AG04450 (cell line): ENCODE measurements at regions of chr20 and their contacts with region 1.

Region 1: DNA sequence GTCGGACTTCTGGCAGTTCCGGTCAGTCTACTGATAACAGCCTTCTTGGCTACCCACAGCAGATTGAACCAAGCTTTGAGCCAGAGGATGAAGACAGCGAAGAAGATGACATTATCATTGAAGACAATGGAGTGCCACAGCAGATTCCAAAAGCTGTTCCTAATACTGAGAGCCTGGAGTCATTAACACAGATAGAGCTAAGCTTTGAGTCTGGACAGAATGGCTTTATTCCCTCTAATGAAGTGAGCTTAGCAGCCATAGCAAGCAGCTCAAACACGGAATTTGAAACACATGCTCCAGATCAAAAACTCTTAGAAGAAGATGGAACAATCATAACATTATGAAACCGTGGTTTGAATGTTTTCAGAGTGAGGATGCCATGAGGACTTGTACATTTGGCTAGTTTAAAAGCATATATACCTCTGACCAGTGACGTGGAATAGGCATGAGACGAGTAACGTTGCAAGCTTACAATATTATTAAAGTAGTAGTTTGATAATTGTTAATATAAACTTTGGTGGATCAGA is 18.8 kb downstream of the PARD6B start:
- DNase-seq: no peak
- H3K4me3 ChIP-seq: no peak overlapping the region
- H3K27ac ChIP-seq: no peak overlapping the region
- H3K27me3 ChIP-seq: no peaks in the 10 kb centered on the region
- CTCF ChIP-seq: no peak

Region 2: GRCh38 chr20:50379049-50379990 is 370.9 kb before region 1 on chr20:
- CTCF ChIA-PET with region 1: no interaction called
- POLR2A ChIA-PET with region 1: no interaction called
- DNase-seq: peak; percentile 46
- H3K4me3 ChIP-seq: peak overlapping the region; percentile 27
- H3K27ac ChIP-seq: peak overlapping the region; percentile 57
- H3K27me3 ChIP-seq: no peaks in the 10 kb centered on the region
- CTCF ChIP-seq: no peak

Region 3: GRCh38 chr20:50588034-50588611 is 162.1 kb before region 1 on chr20:
- CTCF ChIA-PET with region 1: interaction called, 11 read pairs
- POLR2A ChIA-PET with region 1: no interaction called
- DNase-seq: no peak
- H3K4me3 ChIP-seq: no peak overlapping the region
- H3K27ac ChIP-seq: no peak overlapping the region
- H3K27me3 ChIP-seq: no peaks in the 10 kb centered on the region
- CTCF ChIP-seq: peak; percentile 97

Region 4: DNA sequence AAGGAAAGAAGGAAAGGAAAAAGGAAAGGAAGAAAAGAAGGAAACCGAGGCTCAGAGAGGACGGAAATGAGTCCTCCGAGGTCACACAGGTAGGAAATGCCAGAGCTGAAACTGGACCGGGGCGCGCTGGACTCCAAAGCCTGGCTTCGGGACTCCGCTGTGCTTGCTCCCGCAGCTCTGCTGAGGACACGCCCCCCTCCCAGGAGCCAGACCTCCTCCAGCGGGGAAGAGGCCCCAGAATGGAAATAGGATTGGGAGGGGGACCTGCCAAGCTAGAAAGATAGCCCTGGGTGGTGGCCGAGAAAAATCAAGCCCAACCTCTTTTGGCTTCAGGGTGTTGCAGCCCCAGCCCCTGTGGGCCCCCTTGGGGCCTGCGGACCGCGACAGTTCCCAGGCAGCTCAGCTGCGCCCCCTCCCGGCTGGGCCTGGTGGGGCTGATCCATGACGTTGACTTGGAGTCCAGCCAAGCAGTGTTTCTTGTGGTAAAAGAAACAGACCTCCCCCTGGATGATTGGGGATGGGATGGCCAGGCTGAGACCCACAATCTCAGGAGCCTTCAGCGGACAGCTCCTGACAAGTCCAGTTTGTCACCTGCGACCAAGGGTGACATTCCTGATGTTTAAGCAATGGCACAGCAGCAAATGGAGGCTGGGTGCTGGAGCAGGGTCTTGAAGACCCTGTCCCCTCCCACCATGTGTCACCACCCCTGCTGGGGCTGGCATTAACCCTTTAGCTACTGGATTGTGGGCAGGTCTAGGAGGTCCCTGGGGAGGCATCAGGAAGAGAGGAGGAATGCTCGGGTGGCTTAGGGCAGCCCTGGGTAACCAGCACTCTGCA is 114.3 kb before region 1 on chr20:
- CTCF ChIA-PET with region 1: interaction called, 10 read pairs
- POLR2A ChIA-PET with region 1: no interaction called
- DNase-seq: no peak
- H3K4me3 ChIP-seq: peak overlapping the region; percentile 31; the same call in 1 of the 2 replicates
- H3K27ac ChIP-seq: peak overlapping the region; percentile 89
- H3K27me3 ChIP-seq: no peaks in the 10 kb centered on the region
- CTCF ChIP-seq: peak; percentile 94

Region 5: GRCh38 chr20:50724851-50725721 is 25.1 kb before region 1 on chr20:
- CTCF ChIA-PET with region 1: interaction called, 14 read pairs
- POLR2A ChIA-PET with region 1: no interaction called
- DNase-seq: peak; percentile 90
- H3K4me3 ChIP-seq: no peak overlapping the region; the same call in 1 of the 2 replicates
- H3K27ac ChIP-seq: peak overlapping the region; percentile 82
- H3K27me3 ChIP-seq: no peaks in the 10 kb centered on the region
- CTCF ChIP-seq: no peak

Region 6: DNA sequence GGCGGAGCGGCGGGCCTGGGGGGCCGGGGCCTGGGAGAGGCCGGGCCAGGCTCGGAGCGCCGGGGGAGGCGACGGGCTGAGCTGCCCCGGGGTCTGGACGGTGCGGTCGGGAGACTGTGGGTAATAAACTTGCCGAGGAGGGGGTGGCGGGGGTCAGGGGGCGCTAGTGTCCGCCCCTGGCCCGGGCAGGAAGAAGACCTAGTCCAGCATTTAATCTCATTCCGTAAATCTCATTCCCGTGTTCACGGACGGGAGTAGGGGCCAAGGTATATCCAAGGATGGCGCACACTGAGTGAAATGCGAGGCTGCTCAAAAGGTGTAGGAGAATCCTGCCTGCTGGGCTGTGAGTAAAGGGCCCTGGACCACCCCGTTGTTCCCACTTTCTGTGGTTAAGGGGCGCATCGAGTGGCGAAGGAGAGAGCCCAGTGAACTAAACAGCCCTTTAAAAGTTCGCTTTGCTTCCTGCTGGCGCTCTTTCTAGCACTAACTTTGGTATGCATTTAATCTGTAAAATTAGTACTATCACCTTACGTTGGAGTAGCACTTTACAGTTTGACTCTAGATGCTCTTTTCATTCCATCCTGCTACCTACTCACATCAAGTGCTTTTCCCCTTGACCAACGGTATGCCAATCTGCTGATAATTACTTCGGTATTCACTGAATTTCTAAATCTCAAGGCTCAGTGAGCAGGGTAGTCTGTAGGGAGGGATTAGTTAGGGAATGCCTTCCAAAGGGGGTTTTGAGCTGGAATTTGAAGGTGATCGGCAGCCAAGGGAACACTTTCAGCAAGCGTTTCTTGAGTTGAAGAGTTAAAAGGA is 18.1 kb before region 1 on chr20:
- CTCF ChIA-PET with region 1: interaction called, 20 read pairs
- POLR2A ChIA-PET with region 1: no interaction called
- DNase-seq: no peak
- H3K4me3 ChIP-seq: peak overlapping the region; percentile 74
- H3K27ac ChIP-seq: no peak overlapping the region
- H3K27me3 ChIP-seq: peaks cover 2% of the 10 kb centered on the region
- CTCF ChIP-seq: no peak

Region 7: DNA sequence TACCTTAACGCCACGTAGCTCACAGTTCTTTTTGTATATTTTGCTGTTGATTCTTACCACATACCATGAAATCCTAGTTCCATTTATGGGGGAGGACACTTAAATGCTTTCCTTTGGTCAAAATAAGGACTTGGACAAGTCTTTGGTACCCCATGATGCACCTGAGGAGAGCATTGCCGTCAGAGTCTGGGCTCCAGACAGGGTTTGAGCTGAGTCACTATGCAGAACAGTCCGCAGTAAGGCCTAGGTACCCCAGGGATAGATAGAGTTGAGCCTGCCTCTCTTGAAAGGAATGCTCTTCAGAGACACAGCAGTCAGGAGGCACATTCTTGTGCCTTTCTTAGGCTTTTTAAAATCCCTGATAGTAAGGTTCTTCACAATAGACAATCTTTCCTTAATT is 12.9 kb before region 1 on chr20:
- CTCF ChIA-PET with region 1: interaction called, 20 read pairs
- POLR2A ChIA-PET with region 1: no interaction called
- DNase-seq: no peak
- H3K4me3 ChIP-seq: no peak overlapping the region
- H3K27ac ChIP-seq: no peak overlapping the region
- H3K27me3 ChIP-seq: peaks cover under 1% of the 10 kb centered on the region
- CTCF ChIP-seq: no peak

Region 8: GRCh38 chr20:50834599-50835005 is 84.4 kb after region 1 on chr20:
- CTCF ChIA-PET with region 1: no interaction called
- POLR2A ChIA-PET with region 1: no interaction called
- DNase-seq: peak; percentile 93
- H3K4me3 ChIP-seq: no peak overlapping the region
- H3K27ac ChIP-seq: peak overlapping the region; percentile 84
- H3K27me3 ChIP-seq: no peaks in the 10 kb centered on the region
- CTCF ChIP-seq: no peak